CD4-positive, alpha-beta memory T cell (primary cell): ENCODE measurements at regions of chr16 and their contacts with region 1.

Region 1: DNA sequence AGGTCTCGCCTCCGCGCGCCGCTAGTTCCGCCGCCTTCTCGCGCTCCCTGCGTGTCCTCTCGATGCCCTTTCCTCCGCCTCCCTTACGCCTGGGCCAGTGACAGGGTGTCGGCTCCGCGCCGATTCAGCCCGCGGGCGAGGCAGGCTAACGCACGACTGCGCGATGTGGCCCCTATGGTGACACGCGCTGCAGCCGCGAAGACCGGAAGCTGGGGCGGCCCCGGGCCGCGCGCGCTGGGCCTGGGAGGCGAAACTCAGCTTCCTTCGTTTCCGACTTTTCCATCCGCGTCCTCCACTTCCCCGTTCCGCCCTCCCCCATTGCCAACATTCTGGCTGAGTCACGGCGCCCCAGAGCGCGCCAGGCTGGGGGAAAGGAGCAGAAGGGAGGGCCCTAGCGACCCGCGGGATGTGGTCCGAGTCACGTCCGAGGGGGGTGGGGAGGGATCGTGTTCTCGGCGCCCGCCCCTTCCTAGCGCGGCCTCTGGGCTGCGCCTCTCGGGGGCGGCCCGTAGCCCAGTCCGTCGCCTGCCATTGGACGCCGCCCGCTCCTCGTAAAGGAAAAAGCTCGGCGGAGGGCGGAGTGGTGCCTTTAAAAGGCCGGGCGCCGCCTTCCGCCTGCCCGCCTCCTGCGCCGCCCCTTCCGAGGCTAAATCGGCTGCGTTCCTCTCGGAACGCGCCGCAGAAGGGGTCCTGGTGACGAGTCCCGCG is at the start of gene ALDOA:
- DNase-seq: peak; percentile 94 to 96 (median 94)
- H3K4me3 ChIP-seq: peak within 1 kb of the TSS; percentile 77 to 93
- H3K4me3 Mint-ChIP-seq: peak within 1 kb of the TSS; percentile 98 to 100 (median 99)
- H3K27ac ChIP-seq: peak within 1 kb of the TSS; percentile 94
- H3K27ac Mint-ChIP-seq: peak within 1 kb of the TSS; percentile 95 to 100 (median 97)
- H3K4me1 ChIP-seq: peaks cover 47% of the 10 kb centered on the region
- H3K4me1 Mint-ChIP-seq: peaks cover 17 to 58% (median 33%) of the 10 kb centered on the region in 4 donors
- H3K27me3 ChIP-seq: no peaks in the 10 kb centered on the region
- H3K27me3 Mint-ChIP-seq: no peaks in the 10 kb centered on the region
- total RNA-seq, gene ALDOA: 558 to 563 TPM

Region 2: DNA sequence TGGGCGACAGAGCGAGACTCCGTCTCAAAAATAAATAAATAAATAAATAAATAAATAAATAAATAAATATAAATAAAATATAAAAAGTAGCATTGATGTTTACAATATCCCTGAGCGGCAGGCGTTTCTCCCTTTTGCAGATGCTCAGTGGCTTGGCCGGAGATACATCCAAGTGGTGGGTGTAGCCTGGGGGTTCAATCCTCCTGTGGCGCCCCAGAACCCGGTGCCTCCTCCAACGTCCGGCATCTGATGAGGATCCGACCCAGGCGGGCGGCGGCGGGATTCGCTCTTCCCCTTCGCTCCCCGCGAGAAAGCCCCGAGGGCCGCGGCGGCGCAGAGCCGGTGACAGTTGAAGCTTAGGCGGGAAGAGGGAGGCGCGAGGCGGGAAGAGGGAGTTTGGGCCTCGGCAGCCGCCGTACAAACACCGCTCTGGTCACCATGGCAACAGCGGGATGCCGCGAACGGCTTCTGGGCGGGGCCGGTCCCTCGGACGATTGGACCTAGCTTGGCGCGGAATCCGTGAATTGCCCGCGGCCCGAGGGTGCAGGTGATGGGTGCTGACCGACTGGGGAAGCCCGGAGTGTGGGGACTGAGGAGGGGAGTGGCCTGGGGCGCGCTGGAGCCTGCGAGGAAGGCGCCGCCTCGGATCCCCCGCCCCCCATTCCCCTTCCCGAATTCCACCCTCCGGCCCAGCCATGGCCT is 12.5 kb before region 1 on chr16:
- CTCF ChIA-PET with region 1: interaction called, 9 read pairs
- POLR2A ChIA-PET with region 1: interaction called, 91 read pairs
- intact Hi-C with region 1: loop called (anchors 1 kb)
- DNase-seq: peak; percentile 80 to 88 (median 82)
- H3K4me3 ChIP-seq: peak overlapping the region; percentile 23 to 64
- H3K4me3 Mint-ChIP-seq: peak overlapping the region; percentile 84 to 93 (median 87)
- H3K27ac ChIP-seq: no peak overlapping the region
- H3K27ac Mint-ChIP-seq: peak overlapping the region in 6 of 7 donors; percentile 53 to 94 (median 79)
- H3K4me1 ChIP-seq: peaks cover 21% of the 10 kb centered on the region
- H3K4me1 Mint-ChIP-seq: peaks cover 10 to 31% (median 23%) of the 10 kb centered on the region in 4 donors
- H3K27me3 ChIP-seq: no peaks in the 10 kb centered on the region
- H3K27me3 Mint-ChIP-seq: no peaks in the 10 kb centered on the region

Region 3: GRCh38 chr16:30075507-30076275 is 10.4 kb after region 1 on chr16 and contains the start of gene PPP4C:
- CTCF ChIA-PET with region 1: interaction called, 5 read pairs
- POLR2A ChIA-PET with region 1: interaction called, 125 read pairs
- intact Hi-C with region 1: loop called (anchors 1 kb)
- DNase-seq: peak; percentile 89 to 90 (median 90)
- H3K4me3 ChIP-seq: peak within 1 kb of the TSS; percentile 80 to 93
- H3K4me3 Mint-ChIP-seq: peak within 1 kb of the TSS; percentile 92 to 99 (median 94)
- H3K27ac ChIP-seq: peak within 1 kb of the TSS; percentile 89
- H3K27ac Mint-ChIP-seq: peak within 1 kb of the TSS; percentile 96 to 99 (median 98)
- H3K4me1 ChIP-seq: peaks cover 33% of the 10 kb centered on the region
- H3K4me1 Mint-ChIP-seq: peaks cover 20 to 53% (median 34%) of the 10 kb centered on the region in 4 donors
- H3K27me3 ChIP-seq: no peaks in the 10 kb centered on the region
- H3K27me3 Mint-ChIP-seq: no peaks in the 10 kb centered on the region
- total RNA-seq, gene PPP4C: 75.8 to 86.3 TPM

Region 4: GRCh38 chr16:30122604-30123160 is 57.4 kb after region 1 on chr16:
- CTCF ChIA-PET with region 1: interaction called, 5 read pairs
- POLR2A ChIA-PET with region 1: interaction called, 12 read pairs
- intact Hi-C with region 1: loop called (anchors 1 kb)
- DNase-seq: peak in 1 of 5 donors; percentile 54
- H3K4me3 ChIP-seq: peak overlapping the region; percentile 52 to 82
- H3K4me3 Mint-ChIP-seq: peak overlapping the region; percentile 86 to 92 (median 90)
- H3K27ac ChIP-seq: peak overlapping the region; percentile 70
- H3K27ac Mint-ChIP-seq: peak overlapping the region; percentile 81 to 93 (median 88)
- H3K4me1 ChIP-seq: peaks cover 25% of the 10 kb centered on the region
- H3K4me1 Mint-ChIP-seq: peaks cover 8 to 38% (median 20%) of the 10 kb centered on the region in 4 donors
- H3K27me3 ChIP-seq: no peaks in the 10 kb centered on the region
- H3K27me3 Mint-ChIP-seq: no peaks in the 10 kb centered on the region

Region 5: GRCh38 chr16:30370444-30371247 is 305.3 kb after region 1 on chr16 and contains the start of gene TBC1D10B:
- CTCF ChIA-PET with region 1: no interaction called
- POLR2A ChIA-PET with region 1: interaction called, 8 read pairs
- intact Hi-C with region 1: loop called (anchors 2 kb)
- DNase-seq: peak; percentile 99 to 100 (median 100)
- H3K4me3 ChIP-seq: peak within 1 kb of the TSS; percentile 67 to 88
- H3K4me3 Mint-ChIP-seq: peak within 1 kb of the TSS; percentile 87 to 94 (median 90)
- H3K27ac ChIP-seq: peak within 1 kb of the TSS; percentile 72
- H3K27ac Mint-ChIP-seq: peak within 1 kb of the TSS; percentile 83 to 99 (median 95)
- H3K4me1 ChIP-seq: peaks cover 46% of the 10 kb centered on the region
- H3K4me1 Mint-ChIP-seq: peaks cover 43 to 60% (median 49%) of the 10 kb centered on the region in 4 donors
- H3K27me3 ChIP-seq: no peaks in the 10 kb centered on the region
- H3K27me3 Mint-ChIP-seq: peaks cover 0 to 2% of the 10 kb centered on the region in 2 donors
- total RNA-seq, gene TBC1D10B: 47.0 to 55.3 TPM

Region 6: GRCh38 chr16:30378236-30379204 is 313.2 kb after region 1 on chr16:
- CTCF ChIA-PET with region 1: no interaction called
- POLR2A ChIA-PET with region 1: interaction called, 10 read pairs
- intact Hi-C with region 1: loop called (anchors 2 kb)
- DNase-seq: peak; percentile 98 to 99 (median 99)
- H3K4me3 ChIP-seq: peak overlapping the region; percentile 84 to 91
- H3K4me3 Mint-ChIP-seq: peak overlapping the region; percentile 91 to 100 (median 96)
- H3K27ac ChIP-seq: peak overlapping the region; percentile 96
- H3K27ac Mint-ChIP-seq: peak overlapping the region; percentile 97 to 100 (median 100)
- H3K4me1 ChIP-seq: peaks cover 69% of the 10 kb centered on the region
- H3K4me1 Mint-ChIP-seq: peaks cover 32 to 71% (median 48%) of the 10 kb centered on the region in 4 donors
- H3K27me3 ChIP-seq: no peaks in the 10 kb centered on the region
- H3K27me3 Mint-ChIP-seq: no peaks in the 10 kb centered on the region